ENCODE measurements at regions of chr3 and their contacts with region 1.

Region 1: DNA sequence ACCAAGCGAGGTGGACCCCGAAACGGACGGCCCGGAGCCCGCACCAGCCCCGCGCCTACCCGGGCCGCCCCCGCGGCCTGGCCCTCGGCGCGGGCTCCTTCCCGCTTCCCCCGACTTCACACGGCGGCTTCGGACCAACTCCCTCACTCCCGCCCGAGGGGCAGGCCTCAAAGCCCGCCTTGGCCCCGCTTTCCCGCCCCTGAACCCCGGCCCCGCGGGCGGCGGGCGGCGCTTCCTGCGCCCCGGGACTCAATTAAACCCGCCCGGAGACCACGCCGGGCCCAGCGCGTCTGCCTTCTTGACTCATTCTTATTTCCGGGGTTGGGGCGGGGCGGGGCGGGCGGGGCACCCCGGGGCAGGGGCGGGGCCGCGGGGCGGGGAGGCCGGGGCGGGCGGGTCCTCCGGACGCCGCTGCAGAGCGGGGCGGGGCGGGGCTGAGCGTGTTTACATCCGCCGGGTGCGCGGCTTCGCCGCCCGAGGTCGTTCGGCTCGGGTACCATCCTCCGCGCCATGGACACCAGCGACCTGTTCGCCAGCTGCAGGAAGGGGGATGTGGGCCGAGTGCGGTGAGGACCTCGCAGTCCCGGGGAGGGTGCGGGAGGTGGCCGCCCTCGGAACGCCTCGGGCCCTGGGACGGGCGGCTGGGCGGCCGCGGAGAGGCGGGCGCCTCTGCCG is at the start of gene ABTB1:
- DNase-seq: peak; percentile 94
- ATAC-seq: peak; percentile 90
- H3K4me3 Mint-ChIP-seq: peak within 1 kb of the TSS; percentile 88
- H3K27ac Mint-ChIP-seq: peak within 1 kb of the TSS; percentile 96
- H3K4me1 Mint-ChIP-seq: peaks cover 22% of the 10 kb centered on the region
- H3K27me3 Mint-ChIP-seq: no peaks in the 10 kb centered on the region
- total RNA-seq, gene ABTB1: 8.3 to 9.6 TPM

Region 2: GRCh38 chr3:125916376-125916978 is 1756.2 kb before region 1 on chr3:
- CTCF ChIA-PET with region 1: no interaction called
- POLR2A ChIA-PET with region 1: no interaction called
- intact Hi-C with region 1: loop called in 1 of 2 experiments (anchors 2 kb)
- DNase-seq: peak; percentile 99
- ATAC-seq: peak; percentile 94
- H3K4me3 Mint-ChIP-seq: peak overlapping the region; percentile 82
- H3K27ac Mint-ChIP-seq: peak overlapping the region; percentile 72
- H3K4me1 Mint-ChIP-seq: peaks cover 28% of the 10 kb centered on the region
- H3K27me3 Mint-ChIP-seq: no peaks in the 10 kb centered on the region

Region 3: GRCh38 chr3:127590593-127591477 is 81.8 kb before region 1 on chr3 and contains the start of gene TPRA1:
- CTCF ChIA-PET with region 1: no interaction called
- POLR2A ChIA-PET with region 1: no interaction called
- intact Hi-C with region 1: loop called (anchors 1 to 2 kb)
- DNase-seq: peak; percentile 88
- ATAC-seq: peak; percentile 86
- H3K4me3 Mint-ChIP-seq: peak within 1 kb of the TSS; percentile 84
- H3K27ac Mint-ChIP-seq: peak within 1 kb of the TSS; percentile 96
- H3K4me1 Mint-ChIP-seq: peaks cover 25% of the 10 kb centered on the region
- H3K27me3 Mint-ChIP-seq: no peaks in the 10 kb centered on the region
- total RNA-seq, gene TPRA1: 22.5 to 24.8 TPM

Region 4: DNA sequence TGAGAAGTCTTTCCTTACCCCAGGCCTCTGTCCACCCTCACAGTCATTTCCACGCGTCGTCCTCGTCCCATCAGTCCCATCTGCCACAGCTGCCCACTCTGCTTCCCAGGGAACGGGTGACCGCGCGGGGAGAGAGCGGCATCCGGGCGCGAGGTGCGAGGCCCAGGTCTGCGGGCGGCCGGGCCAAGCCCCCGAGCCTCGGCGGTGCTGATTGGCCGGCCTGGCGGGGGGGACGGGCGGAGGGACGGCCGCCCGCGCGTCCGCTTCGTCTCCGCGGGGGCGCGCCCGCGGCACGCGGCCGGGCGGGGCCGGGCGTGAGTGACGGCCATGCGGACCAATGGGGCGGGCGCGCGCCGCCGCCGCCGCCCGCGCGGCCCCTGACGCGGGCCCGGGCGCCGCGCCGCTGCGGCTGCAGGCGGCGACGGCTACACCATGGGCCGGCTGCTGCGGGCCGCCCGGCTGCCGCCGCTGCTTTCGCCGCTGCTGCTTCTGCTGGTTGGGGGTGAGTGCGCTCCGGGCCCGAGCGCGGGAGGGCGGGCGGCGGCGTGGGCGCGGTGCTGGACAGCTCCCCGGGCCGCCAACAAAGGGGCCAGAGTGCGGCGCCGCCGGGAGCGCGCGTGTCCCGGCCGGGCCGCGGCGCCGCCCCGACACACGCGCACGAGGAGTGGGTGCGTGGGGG is 43.7 kb before region 1 on chr3 and contains the start of gene PODXL2:
- CTCF ChIA-PET with region 1: no interaction called
- POLR2A ChIA-PET with region 1: no interaction called
- intact Hi-C with region 1: loop called in 1 of 2 experiments (anchors 2 kb)
- DNase-seq: peak; percentile 53
- ATAC-seq: peak; percentile 61
- H3K4me3 Mint-ChIP-seq: peak within 1 kb of the TSS; percentile 66
- H3K27ac Mint-ChIP-seq: peak within 1 kb of the TSS; percentile 58
- H3K4me1 Mint-ChIP-seq: peaks cover 28% of the 10 kb centered on the region
- H3K27me3 Mint-ChIP-seq: peaks cover 24% of the 10 kb centered on the region
- total RNA-seq, gene PODXL2: 1.9 TPM

Region 5: DNA sequence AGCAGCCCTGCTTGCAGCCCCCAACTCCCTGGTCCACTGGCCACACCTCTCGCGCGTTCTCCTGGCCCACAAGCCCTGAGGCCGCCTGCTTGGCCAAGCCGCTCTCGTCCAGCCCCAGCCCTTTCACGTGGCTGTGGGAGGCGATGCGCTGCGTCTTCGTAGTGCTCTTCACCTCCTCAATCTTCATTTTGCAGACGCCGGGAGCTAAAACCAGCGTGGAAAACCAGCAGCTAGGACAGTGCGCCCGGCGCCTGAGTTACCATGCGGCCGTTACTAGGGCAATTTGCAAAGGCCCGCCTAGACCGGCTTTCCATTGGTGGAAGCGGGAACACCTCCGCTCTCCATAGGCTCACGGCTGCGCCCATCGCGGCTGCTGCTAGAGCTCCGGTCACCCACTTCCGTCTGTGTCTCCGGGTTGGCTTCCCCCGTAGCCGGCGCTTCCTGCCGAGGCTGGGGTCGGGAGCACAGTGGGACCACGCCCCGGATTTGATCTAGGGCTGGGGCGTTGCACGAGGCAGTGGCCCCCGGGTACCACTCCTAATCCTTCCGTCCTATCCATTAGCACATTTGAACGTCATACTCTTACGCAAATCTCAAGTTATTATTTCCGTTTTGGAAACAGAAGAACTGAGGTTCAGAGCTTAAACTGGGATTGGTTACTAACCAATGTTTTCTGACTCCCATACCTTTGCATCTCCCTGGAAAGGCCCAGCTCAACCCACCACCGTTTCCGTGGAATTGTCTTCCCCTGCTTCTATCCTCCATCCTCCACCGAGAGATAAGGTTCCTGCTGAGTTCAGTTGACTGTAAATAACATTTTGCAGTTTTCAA is 451.1 kb after region 1 on chr3 and contains the start of gene RUVBL1:
- CTCF ChIA-PET with region 1: no interaction called
- POLR2A ChIA-PET with region 1: no interaction called
- intact Hi-C with region 1: loop called in 1 of 2 experiments (anchors 1 kb)
- DNase-seq: peak; percentile 99
- ATAC-seq: peak; percentile 99
- H3K4me3 Mint-ChIP-seq: peak within 1 kb of the TSS; percentile 99
- H3K27ac Mint-ChIP-seq: peak within 1 kb of the TSS; percentile 96
- H3K4me1 Mint-ChIP-seq: peaks cover 30% of the 10 kb centered on the region
- H3K27me3 Mint-ChIP-seq: no peaks in the 10 kb centered on the region
- total RNA-seq, gene RUVBL1: 97.0 to 99.9 TPM

Region 6: GRCh38 chr3:129428376-129429079 is 1755.9 kb after region 1 on chr3 and contains the start of gene EFCAB12:
- CTCF ChIA-PET with region 1: no interaction called
- POLR2A ChIA-PET with region 1: no interaction called
- intact Hi-C with region 1: loop called in 1 of 2 experiments (anchors 5 kb)
- DNase-seq: peak; percentile 95
- ATAC-seq: peak; percentile 96
- H3K4me3 Mint-ChIP-seq: peak within 1 kb of the TSS; percentile 59
- H3K27ac Mint-ChIP-seq: peak within 1 kb of the TSS; percentile 63
- H3K4me1 Mint-ChIP-seq: peaks cover 43% of the 10 kb centered on the region
- H3K27me3 Mint-ChIP-seq: no peaks in the 10 kb centered on the region
- total RNA-seq, gene EFCAB12: 0.56 to 0.73 TPM